Ovary (tissue), 10 donors: ENCODE measurements at regions of chr7 and their contacts with region 1.

Region 1: DNA sequence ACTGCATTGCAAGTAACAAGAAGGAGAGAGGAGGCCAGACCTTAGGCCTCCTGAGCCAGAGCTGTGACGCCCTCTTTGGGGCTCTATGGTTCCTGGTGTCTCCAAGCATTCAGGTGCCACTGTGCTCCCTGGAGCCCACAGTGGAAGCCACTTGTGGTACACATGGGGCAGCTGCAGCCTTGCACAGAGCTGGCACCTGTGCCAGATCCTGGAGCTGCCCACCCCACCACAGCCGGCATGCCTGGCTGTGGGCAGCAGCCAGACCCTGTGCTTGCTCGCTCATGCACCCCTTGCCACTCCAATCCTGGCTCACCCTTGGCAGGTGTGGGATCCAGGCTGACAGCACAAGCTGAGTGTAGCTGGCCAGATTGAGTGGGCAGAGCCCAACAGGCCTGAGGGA is 173.8 kb upstream of the SMIM30 start:
- DNase-seq: no peak
- H3K4me3 ChIP-seq: no peak overlapping the region
- H3K27ac ChIP-seq: no peak overlapping the region
- H3K4me1 ChIP-seq: no peaks in the 10 kb centered on the region
- H3K27me3 ChIP-seq: no peaks in the 10 kb centered on the region
- CTCF ChIP-seq: no peak
- EP300 ChIP-seq: no peak
- POLR2A ChIP-seq: no peak

Region 2: GRCh38 chr7:111682588-111683340 is 1609.3 kb before region 1 on chr7:
- intact Hi-C with region 1: loop called in 1 of 4 experiments (anchors 10 kb)
- DNase-seq: no peak
- H3K4me3 ChIP-seq: no peak overlapping the region
- H3K27ac ChIP-seq: no peak overlapping the region
- H3K4me1 ChIP-seq: no peaks in the 10 kb centered on the region
- H3K27me3 ChIP-seq: no peaks in the 10 kb centered on the region
- CTCF ChIP-seq: no peak
- EP300 ChIP-seq: no peak
- POLR2A ChIP-seq: no peak

Region 3: DNA sequence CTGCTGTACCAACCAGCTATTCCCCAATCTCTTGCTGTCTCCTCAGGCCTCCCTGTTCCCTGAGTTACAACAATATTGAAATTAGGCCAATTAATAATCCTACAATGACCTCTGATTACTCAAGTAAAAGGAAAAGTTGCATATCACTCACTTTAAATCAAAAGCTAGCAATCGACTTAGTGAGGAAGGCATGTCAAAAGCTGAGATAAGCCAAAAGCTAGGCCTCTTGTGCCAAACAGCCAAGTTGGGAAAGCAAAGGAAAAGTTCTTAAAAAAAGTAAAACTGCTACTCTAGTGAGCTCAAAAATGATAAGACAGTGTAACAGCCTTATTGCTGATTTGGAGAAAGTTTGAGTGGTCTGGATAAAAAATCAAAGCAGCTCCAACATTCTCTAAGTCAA is 681.5 kb before region 1 on chr7:
- intact Hi-C with region 1: no loop called
- DNase-seq: no peak
- H3K4me3 ChIP-seq: no peak overlapping the region
- H3K27ac ChIP-seq: no peak overlapping the region
- H3K4me1 ChIP-seq: no peaks in the 10 kb centered on the region
- H3K27me3 ChIP-seq: no peaks in the 10 kb centered on the region
- CTCF ChIP-seq: no peak
- EP300 ChIP-seq: no peak
- POLR2A ChIP-seq: no peak